CD4-positive, alpha-beta T cell (primary cell): ENCODE measurements at regions of chr4 and their contacts with region 1.

Region 1: DNA sequence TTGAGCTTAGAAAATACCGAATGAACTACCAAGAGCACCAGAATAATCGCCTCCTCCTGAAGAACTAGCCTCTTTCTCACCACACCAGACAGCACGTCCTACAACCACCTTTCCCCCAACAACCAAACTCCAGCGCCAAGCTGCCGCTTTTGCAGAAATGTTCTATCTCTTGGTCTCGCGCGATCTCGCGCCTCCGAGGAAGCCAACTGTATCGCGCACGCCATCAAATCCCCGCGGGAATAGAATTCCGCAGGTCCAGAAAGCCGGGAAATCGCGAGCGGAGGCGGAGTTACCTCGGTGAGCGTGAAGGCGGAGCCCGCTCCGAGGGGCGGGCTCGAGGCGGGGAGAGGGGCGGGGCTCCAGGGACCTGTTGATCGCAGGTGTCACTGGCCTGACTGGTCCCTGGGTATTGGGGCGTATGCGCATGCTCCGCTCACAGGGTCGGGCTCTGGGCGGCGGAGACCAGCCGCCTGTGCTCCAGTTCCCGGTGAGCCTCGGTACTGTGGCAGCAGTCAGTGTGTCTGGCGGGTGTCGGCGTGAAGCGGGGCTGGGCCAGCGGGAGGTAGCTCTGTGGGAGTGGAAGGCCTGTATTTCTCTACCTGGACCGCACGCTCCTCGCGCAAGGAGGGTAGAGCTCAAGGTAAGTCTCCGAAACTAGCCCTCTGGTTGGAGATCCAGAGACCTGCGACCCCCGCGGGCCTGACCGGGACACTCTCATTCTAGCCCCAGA is at the start of gene USP53:
- DNase-seq: peak; percentile 96 to 99 (median 98)
- ATAC-seq: peak; percentile 92
- H3K4me3 ChIP-seq: peak within 1 kb of the TSS; percentile 81
- H3K4me3 Mint-ChIP-seq: peak within 1 kb of the TSS; percentile 94
- H3K27ac ChIP-seq: peak within 1 kb of the TSS; percentile 78 to 80
- H3K27ac Mint-ChIP-seq: peak within 1 kb of the TSS; percentile 96
- H3K4me1 ChIP-seq: peaks cover 9% of the 10 kb centered on the region
- H3K4me1 Mint-ChIP-seq: peaks cover 39% of the 10 kb centered on the region
- H3K27me3 ChIP-seq: no peaks in the 10 kb centered on the region
- H3K27me3 Mint-ChIP-seq: no peaks in the 10 kb centered on the region
- CTCF ChIP-seq: no peak
- total RNA-seq, gene USP53: 15.1 to 15.5 TPM

Region 2: DNA sequence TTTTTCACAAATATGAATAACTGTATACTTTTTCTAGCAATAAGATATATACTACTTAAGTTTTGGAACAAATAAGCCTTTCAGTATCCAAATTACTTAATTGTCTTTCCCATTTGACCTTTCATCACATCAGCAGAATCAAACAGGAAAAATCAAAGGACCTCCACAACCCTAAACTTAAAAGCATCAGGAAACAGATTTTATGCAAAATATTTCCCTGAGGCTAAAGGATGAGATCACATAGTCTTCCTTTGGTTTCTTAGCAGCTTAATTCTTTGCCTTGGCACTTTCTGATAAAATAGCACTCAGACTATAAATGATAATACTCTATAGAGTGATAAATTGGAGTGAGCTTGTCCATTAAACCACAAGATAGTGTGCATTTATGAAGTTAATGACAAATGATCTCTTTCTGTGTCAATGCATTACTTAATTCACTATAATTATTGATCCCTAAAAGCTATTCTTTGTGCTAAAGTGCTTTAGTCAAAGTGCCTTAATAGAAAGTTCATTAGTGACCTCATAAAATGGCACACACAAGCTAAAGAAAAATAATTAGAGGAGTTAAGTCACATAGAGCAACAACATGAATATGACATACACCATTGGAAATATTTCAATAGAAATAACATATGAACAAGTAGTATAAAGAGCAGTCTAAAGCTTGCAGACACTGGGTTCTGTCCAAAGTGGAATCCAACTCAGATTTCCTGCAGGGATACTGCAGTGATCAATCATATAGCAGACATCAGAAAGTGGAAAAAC is 1193.8 kb before region 1 on chr4:
- CTCF ChIA-PET with region 1: no interaction called
- POLR2A ChIA-PET with region 1: no interaction called
- intact Hi-C with region 1: no loop called
- DNase-seq: no peak
- ATAC-seq: no peak
- H3K4me3 ChIP-seq: no peak overlapping the region
- H3K4me3 Mint-ChIP-seq: no peak overlapping the region
- H3K27ac ChIP-seq: no peak overlapping the region
- H3K27ac Mint-ChIP-seq: no peak overlapping the region
- H3K4me1 ChIP-seq: no peaks in the 10 kb centered on the region
- H3K4me1 Mint-ChIP-seq: no peaks in the 10 kb centered on the region
- H3K27me3 ChIP-seq: no peaks in the 10 kb centered on the region
- H3K27me3 Mint-ChIP-seq: no peaks in the 10 kb centered on the region
- CTCF ChIP-seq: no peak

Region 3: GRCh38 chr4:118367872-118368271 is 844.5 kb before region 1 on chr4:
- CTCF ChIA-PET with region 1: no interaction called
- POLR2A ChIA-PET with region 1: no interaction called
- intact Hi-C with region 1: no loop called
- DNase-seq: no peak
- ATAC-seq: no peak
- H3K4me3 ChIP-seq: no peak overlapping the region
- H3K4me3 Mint-ChIP-seq: no peak overlapping the region
- H3K27ac ChIP-seq: no peak overlapping the region
- H3K27ac Mint-ChIP-seq: no peak overlapping the region
- H3K4me1 ChIP-seq: no peaks in the 10 kb centered on the region
- H3K4me1 Mint-ChIP-seq: no peaks in the 10 kb centered on the region
- H3K27me3 ChIP-seq: peaks cover 0 to 3% of the 10 kb centered on the region in 2 experiments
- H3K27me3 Mint-ChIP-seq: peaks cover 52% of the 10 kb centered on the region
- CTCF ChIP-seq: no peak

Region 4: DNA sequence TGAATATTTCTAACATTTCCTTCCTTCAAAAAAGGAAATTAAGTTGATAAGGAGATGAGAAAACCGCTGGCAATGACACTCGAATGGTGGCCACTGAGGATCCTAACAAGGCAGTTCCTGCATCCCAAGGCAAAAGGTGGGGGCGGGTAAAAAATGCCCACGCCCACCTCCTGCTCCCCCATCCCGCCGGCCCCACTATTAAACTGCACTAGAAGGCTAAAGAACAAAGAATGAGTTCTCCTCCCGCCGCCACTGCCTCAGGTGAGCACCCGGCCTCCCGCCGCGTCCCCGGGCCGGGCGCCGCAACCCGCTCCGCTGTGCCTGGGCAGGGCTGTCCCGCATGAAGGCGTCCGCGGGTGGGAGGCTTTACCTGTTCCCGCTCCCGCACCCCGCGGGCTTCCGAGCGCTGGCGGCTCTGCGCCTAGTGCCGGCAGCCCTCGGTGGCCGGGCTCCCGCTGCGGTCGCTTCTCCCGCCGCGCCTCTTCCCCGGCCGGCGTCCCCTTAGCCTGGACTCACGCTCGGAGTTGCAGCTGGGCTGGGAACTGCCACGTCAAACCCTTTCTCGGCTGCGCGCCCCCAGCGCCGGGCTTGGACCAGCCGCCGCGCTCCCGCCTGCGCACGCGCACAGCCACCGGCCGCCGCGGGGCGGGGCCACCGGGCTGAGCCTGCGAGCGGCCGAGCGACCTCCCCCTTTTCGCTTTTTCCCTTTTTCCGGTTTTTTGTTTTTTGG is 376.7 kb before region 1 on chr4 and contains the start of gene SEC24D:
- CTCF ChIA-PET with region 1: no interaction called
- POLR2A ChIA-PET with region 1: no interaction called
- intact Hi-C with region 1: loop called in 1 of 2 experiments (anchors 10 kb)
- DNase-seq: peak; percentile 61 to 92 (median 76)
- ATAC-seq: peak; percentile 80
- H3K4me3 ChIP-seq: peak within 1 kb of the TSS; percentile 92
- H3K4me3 Mint-ChIP-seq: peak within 1 kb of the TSS; percentile 100
- H3K27ac ChIP-seq: peak within 1 kb of the TSS; percentile 72 to 91
- H3K27ac Mint-ChIP-seq: peak within 1 kb of the TSS; percentile 88
- H3K4me1 ChIP-seq: peaks cover 18% of the 10 kb centered on the region
- H3K4me1 Mint-ChIP-seq: peaks cover 24% of the 10 kb centered on the region
- H3K27me3 ChIP-seq: no peaks in the 10 kb centered on the region
- H3K27me3 Mint-ChIP-seq: no peaks in the 10 kb centered on the region
- CTCF ChIP-seq: no peak
- total RNA-seq, gene SEC24D: 13.9 to 14.8 TPM

Region 5: GRCh38 chr4:119139822-119140252 is 72.6 kb before region 1 on chr4:
- CTCF ChIA-PET with region 1: no interaction called
- POLR2A ChIA-PET with region 1: interaction called, 15 read pairs
- intact Hi-C with region 1: loop called in 1 of 2 experiments (anchors 5 kb)
- DNase-seq: peak in 4 of 14 experiments; percentile 14 to 46 (median 16)
- ATAC-seq: peak; percentile 43
- H3K4me3 ChIP-seq: peak overlapping the region; percentile 13
- H3K4me3 Mint-ChIP-seq: peak overlapping the region; percentile 68
- H3K27ac ChIP-seq: peak overlapping the region in 1 of 2 donors; percentile 42
- H3K27ac Mint-ChIP-seq: peak overlapping the region; percentile 71
- H3K4me1 ChIP-seq: peaks cover 8% of the 10 kb centered on the region
- H3K4me1 Mint-ChIP-seq: peaks cover 36% of the 10 kb centered on the region
- H3K27me3 ChIP-seq: no peaks in the 10 kb centered on the region
- H3K27me3 Mint-ChIP-seq: no peaks in the 10 kb centered on the region
- CTCF ChIP-seq: no peak

Region 6: DNA sequence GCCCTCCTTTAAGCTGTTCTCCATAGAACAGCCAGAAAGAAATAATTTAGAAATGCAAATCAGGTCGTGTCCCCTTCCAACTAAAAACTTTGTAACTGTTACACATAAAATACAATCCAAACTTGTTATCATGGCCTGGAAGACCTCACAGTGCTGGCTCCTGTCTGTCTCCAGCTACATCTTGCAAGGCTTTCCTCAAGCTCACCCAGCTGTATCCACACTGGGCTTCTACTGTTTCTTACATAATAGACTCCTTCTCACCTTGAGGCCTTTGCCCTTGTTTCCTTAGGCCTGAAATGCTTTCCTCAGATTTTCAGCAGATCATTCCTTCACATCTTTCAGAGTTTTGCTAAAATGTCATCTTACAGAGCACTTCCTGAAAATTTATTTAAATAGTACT is 33.4 kb before region 1 on chr4:
- CTCF ChIA-PET with region 1: no interaction called
- POLR2A ChIA-PET with region 1: no interaction called
- intact Hi-C with region 1: no loop called
- DNase-seq: no peak
- ATAC-seq: no peak
- H3K4me3 ChIP-seq: no peak overlapping the region
- H3K4me3 Mint-ChIP-seq: no peak overlapping the region
- H3K27ac ChIP-seq: no peak overlapping the region
- H3K27ac Mint-ChIP-seq: no peak overlapping the region
- H3K4me1 ChIP-seq: no peaks in the 10 kb centered on the region
- H3K4me1 Mint-ChIP-seq: no peaks in the 10 kb centered on the region
- H3K27me3 ChIP-seq: peaks cover 0 to 3% of the 10 kb centered on the region in 2 experiments
- H3K27me3 Mint-ChIP-seq: peaks cover 13% of the 10 kb centered on the region
- CTCF ChIP-seq: no peak

Region 7: DNA sequence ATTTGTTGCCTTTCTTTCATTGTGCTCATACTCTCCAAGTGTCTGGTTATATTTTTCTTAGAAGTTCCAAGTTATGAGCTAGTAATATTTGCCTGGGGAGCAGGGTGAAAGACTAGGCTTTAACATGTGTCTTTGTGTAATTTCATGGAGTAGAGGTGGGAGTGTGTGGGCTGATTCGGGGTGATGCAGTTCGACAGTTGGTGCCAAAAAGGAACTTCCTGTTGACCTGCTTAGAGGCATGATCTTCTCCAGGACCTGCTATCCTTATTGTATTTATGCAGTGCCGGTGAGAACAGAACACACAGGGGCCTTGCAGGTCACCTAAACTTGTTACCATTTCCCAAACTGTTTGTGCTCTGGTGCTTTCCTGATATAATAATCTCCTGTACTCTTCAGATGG is 21.4 kb after region 1 on chr4:
- CTCF ChIA-PET with region 1: interaction called, 5 read pairs
- POLR2A ChIA-PET with region 1: interaction called, 7 read pairs
- intact Hi-C with region 1: loop called in 1 of 2 experiments (anchors 2 kb)
- DNase-seq: peak in 1 of 14 experiments; percentile 17
- ATAC-seq: peak; percentile 48
- H3K4me3 ChIP-seq: no peak overlapping the region
- H3K4me3 Mint-ChIP-seq: no peak overlapping the region
- H3K27ac ChIP-seq: no peak overlapping the region
- H3K27ac Mint-ChIP-seq: no peak overlapping the region
- H3K4me1 ChIP-seq: peaks cover 6% of the 10 kb centered on the region
- H3K4me1 Mint-ChIP-seq: peaks cover 76% of the 10 kb centered on the region
- H3K27me3 ChIP-seq: no peaks in the 10 kb centered on the region
- H3K27me3 Mint-ChIP-seq: no peaks in the 10 kb centered on the region
- CTCF ChIP-seq: no peak

Region 8: GRCh38 chr4:119286377-119287002 is 74.1 kb after region 1 on chr4:
- CTCF ChIA-PET with region 1: interaction called, 3 read pairs
- POLR2A ChIA-PET with region 1: no interaction called
- intact Hi-C with region 1: loop called (anchors 5 to 10 kb)
- DNase-seq: peak in 10 of 14 experiments; percentile 3 to 74 (median 17)
- ATAC-seq: peak; percentile 55
- H3K4me3 ChIP-seq: no peak overlapping the region
- H3K4me3 Mint-ChIP-seq: no peak overlapping the region
- H3K27ac ChIP-seq: no peak overlapping the region
- H3K27ac Mint-ChIP-seq: no peak overlapping the region
- H3K4me1 ChIP-seq: no peaks in the 10 kb centered on the region
- H3K4me1 Mint-ChIP-seq: peaks cover 30% of the 10 kb centered on the region
- H3K27me3 ChIP-seq: no peaks in the 10 kb centered on the region
- H3K27me3 Mint-ChIP-seq: no peaks in the 10 kb centered on the region
- CTCF ChIP-seq: peak; percentile 76

Region 9: DNA sequence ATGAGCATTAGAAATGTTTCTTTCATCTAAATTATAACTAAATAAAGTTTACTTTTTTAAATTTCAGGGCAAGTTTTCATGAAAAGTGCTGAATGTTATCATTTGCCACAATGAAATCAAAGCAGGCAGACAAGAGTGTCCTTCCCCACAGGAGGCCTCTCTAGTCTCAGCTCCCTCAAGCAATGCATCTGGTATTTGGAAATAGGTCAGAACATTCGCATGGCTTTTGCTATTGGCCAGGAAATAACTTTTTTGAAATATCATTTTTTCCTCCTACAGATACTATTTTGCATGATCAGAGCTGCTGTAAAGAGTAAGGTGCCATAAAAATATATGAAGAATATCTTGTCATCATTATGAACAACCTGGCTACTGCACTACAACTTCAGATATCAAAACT is 813.1 kb after region 1 on chr4:
- CTCF ChIA-PET with region 1: no interaction called
- POLR2A ChIA-PET with region 1: no interaction called
- intact Hi-C with region 1: no loop called
- DNase-seq: no peak
- ATAC-seq: no peak
- H3K4me3 ChIP-seq: no peak overlapping the region
- H3K4me3 Mint-ChIP-seq: no peak overlapping the region
- H3K27ac ChIP-seq: no peak overlapping the region
- H3K27ac Mint-ChIP-seq: no peak overlapping the region
- H3K4me1 ChIP-seq: no peaks in the 10 kb centered on the region
- H3K4me1 Mint-ChIP-seq: no peaks in the 10 kb centered on the region
- H3K27me3 ChIP-seq: peaks cover 0 to 7% of the 10 kb centered on the region in 2 experiments
- H3K27me3 Mint-ChIP-seq: peaks cover 14% of the 10 kb centered on the region
- CTCF ChIP-seq: no peak